ENCODE measurements at regions of chr11 and their contacts with region 1.

Region 1: DNA sequence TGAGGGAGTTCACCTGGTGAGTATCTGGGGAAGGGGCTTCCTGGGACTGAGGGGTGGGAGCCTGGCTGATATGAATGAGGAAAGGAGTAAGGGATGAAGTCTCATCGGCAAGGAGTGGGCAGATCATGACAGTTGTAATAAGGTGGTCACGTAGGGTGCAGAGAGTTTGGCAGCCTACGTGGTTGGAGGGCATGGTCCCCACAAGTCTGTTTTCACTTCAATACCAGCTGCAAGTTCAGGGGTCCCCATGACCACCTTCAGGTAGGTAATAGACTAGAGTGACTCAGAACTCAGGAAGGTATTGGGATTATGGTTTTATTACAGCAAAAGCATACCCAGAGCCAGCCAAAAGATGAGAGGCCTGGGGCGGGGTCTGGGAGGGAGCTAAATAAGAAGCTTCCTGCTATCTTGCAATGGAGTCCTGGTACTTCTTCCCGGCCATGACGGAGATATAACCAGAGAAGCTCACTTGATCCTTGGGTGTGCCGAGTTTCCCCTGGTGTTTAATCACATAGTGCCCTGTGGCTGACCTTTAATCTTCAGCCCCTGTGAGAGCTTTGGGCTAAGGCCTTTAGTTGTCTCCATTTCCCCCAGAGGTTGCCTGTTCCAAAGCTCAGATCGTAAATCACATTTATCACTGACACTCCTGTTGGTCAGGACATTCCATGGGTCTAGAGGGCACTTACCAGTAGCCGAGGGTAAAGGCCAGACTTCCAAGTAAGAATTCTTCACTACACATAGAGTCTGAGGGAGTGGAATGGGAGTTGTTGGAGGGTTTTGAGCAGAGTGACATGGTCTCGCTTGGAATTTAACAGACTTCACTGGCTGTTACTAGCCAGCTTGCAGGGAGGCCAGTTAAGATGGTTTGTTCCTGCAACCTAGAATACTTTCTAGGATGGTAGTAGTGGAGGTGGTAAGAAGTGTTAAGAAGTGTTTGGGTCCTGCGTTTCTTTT is 9.1 kb downstream of the SLC3A2 start:
- DNase-seq: peak; percentile 57
- ATAC-seq: peak; percentile 67
- H3K4me3 ChIP-seq: no peak overlapping the region
- H3K27ac ChIP-seq: peak overlapping the region; percentile 60
- H3K4me1 ChIP-seq: peaks cover 30% of the 10 kb centered on the region
- H3K27me3 ChIP-seq: no peaks in the 10 kb centered on the region
- CTCF ChIP-seq: no peak

Region 2: GRCh38 chr11:63683133-63683991 is 793.6 kb after region 1 on chr11:
- CTCF ChIA-PET with region 1: interaction called, 12 read pairs
- POLR2A ChIA-PET with region 1: no interaction called
- in situ Hi-C with region 1: no loop called
- intact Hi-C with region 1: no loop called
- DNase-seq: no peak
- ATAC-seq: no peak
- H3K4me3 ChIP-seq: peak overlapping the region; percentile 58 to 94
- H3K27ac ChIP-seq: peak overlapping the region; percentile 81
- H3K4me1 ChIP-seq: peaks cover 16% of the 10 kb centered on the region; the same call in 1 of the 2 replicates
- H3K27me3 ChIP-seq: no peaks in the 10 kb centered on the region
- CTCF ChIP-seq: no peak

Measured in Panc1 (cell line).